ENCODE measurements at regions of chr6 and their contacts with region 1.

Region 1: GRCh38 chr6:3118353-3119039 is at the start of gene BPHL:
- DNase-seq: peak; percentile 100
- H3K4me3 Mint-ChIP-seq: peak within 1 kb of the TSS; percentile 89
- H3K27ac Mint-ChIP-seq: peak within 1 kb of the TSS; percentile 91
- H3K4me1 Mint-ChIP-seq: peaks cover 14% of the 10 kb centered on the region
- H3K27me3 Mint-ChIP-seq: peaks cover 3% of the 10 kb centered on the region
- total RNA-seq, gene BPHL: 6.8 and 7.7 TPM in 2 replicates

Region 2: GRCh38 chr6:2665146-2666070 is 453.1 kb before region 1 on chr6:
- intact Hi-C with region 1: no loop called
- DNase-seq: no peak
- H3K4me3 Mint-ChIP-seq: no peak overlapping the region
- H3K27ac Mint-ChIP-seq: no peak overlapping the region
- H3K4me1 Mint-ChIP-seq: no peaks in the 10 kb centered on the region
- H3K27me3 Mint-ChIP-seq: peaks cover 3% of the 10 kb centered on the region

Region 3: GRCh38 chr6:3046295-3046694 is 72.2 kb before region 1 on chr6:
- intact Hi-C with region 1: no loop called
- DNase-seq: no peak
- H3K4me3 Mint-ChIP-seq: no peak overlapping the region
- H3K27ac Mint-ChIP-seq: no peak overlapping the region
- H3K4me1 Mint-ChIP-seq: peaks cover 2% of the 10 kb centered on the region
- H3K27me3 Mint-ChIP-seq: peaks cover 31% of the 10 kb centered on the region

Region 4: GRCh38 chr6:3068329-3069214 is 49.9 kb before region 1 on chr6 and contains the start of gene RIPK1:
- intact Hi-C with region 1: loop called (anchors 1 kb)
- DNase-seq: peak; percentile 99
- H3K4me3 Mint-ChIP-seq: peak within 1 kb of the TSS; percentile 98
- H3K27ac Mint-ChIP-seq: peak within 1 kb of the TSS; percentile 97
- H3K4me1 Mint-ChIP-seq: peaks cover 47% of the 10 kb centered on the region
- H3K27me3 Mint-ChIP-seq: no peaks in the 10 kb centered on the region
- total RNA-seq, gene RIPK1: 17.0 and 17.9 TPM in 2 replicates

Region 5: DNA sequence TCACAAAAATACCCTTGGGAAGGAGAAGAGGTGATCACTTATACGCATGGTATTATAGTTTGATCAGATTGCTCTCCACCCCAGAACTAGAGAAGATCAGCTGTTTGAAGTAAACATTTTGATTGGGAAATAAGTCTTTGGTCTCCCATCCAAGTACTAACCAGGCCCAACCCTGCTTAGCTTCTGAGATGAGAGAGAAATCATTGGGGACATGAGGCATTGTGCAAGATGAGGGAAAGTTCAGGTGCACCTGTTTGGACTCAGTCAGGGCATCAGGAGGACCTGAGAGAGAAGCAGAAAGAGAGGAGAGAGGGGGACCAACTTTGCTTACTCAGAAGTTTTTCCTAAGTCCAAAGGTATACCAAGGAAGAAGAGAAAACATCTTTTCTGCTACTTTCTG is 38.8 kb before region 1 on chr6:
- intact Hi-C with region 1: no loop called
- DNase-seq: no peak
- H3K4me3 Mint-ChIP-seq: no peak overlapping the region
- H3K27ac Mint-ChIP-seq: no peak overlapping the region
- H3K4me1 Mint-ChIP-seq: peaks cover 16% of the 10 kb centered on the region
- H3K27me3 Mint-ChIP-seq: no peaks in the 10 kb centered on the region

Region 6: DNA sequence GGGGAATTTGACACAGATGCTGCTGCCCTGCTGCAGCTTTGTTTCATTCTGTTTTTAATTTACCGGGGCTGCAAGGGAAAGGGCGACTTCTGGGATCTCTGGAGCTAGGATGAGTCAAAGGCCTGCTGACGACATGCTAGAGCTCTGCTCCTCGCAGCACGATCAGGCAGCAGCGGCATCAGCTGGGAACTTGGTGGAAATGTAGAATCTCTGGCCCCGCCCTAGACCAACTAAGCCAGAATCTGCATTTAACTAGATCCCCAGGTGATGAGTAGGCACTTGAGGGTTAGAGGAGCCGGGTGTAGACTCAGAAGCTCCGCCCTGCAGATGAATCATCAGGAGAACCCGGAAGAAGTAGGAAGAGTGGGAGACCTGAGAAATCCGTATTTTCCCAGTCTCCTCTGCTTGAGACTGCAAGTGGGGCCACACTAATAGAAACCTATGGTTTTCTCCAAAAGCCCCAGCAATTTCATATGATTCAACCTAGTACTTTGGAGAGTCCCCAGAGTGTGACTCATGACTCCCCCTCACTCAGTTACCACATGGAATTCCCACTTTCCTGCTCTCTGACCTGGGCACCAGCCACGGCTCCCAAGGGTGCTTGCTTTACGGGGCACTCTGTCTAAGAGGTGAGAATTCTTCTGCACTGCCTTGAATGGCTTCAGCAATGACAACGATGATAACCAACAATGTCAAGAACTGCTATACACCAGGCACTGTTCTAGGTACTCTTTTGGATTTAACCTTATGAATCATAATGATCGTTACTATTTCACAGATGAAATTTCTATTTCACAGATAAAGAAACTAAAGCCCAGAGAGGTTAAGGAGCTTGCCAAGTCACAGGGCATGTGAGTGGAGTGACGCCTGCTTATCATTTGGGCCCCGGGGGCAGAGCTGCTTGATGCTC is 90.9 kb after region 1 on chr6:
- intact Hi-C with region 1: loop called (anchors 1 kb)
- DNase-seq: peak; percentile 70
- H3K4me3 Mint-ChIP-seq: peak overlapping the region; percentile 46
- H3K27ac Mint-ChIP-seq: peak overlapping the region; percentile 94
- H3K4me1 Mint-ChIP-seq: peaks cover 25% of the 10 kb centered on the region
- H3K27me3 Mint-ChIP-seq: peaks cover 26% of the 10 kb centered on the region